ENCODE measurements at regions of chr5 and their contacts with region 1.

Region 1: GRCh38 chr5:112210430-112211005 is 208.6 kb downstream of the EPB41L4A start:
- DNase-seq: no peak
- H3K4me3 ChIP-seq: no peak overlapping the region
- CTCF ChIP-seq: peak; percentile 44

Region 2: DNA sequence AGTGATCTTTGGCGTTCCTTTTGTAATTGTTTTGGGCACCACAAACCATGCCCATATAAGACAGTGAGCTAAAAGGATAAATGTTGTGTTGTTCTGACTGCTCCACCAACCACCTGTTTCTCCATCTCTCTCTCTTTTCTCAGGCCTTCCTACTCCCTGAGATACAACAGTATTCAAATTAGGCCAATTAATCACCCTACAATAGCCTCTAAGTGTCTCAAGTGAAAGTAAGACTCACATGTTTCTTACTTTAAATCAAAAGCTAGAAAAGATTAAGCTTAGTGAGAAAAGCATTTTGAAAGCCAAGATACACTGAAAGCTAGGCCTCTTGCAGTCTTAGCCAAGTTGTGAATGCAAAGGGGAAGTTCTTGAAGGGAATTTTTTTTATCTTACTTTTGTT is 184.8 kb before region 1 on chr5:
- CTCF ChIA-PET with region 1: no interaction called
- POLR2A ChIA-PET with region 1: no interaction called
- DNase-seq: no peak
- H3K4me3 ChIP-seq: no peak overlapping the region
- CTCF ChIP-seq: no peak

Region 3: DNA sequence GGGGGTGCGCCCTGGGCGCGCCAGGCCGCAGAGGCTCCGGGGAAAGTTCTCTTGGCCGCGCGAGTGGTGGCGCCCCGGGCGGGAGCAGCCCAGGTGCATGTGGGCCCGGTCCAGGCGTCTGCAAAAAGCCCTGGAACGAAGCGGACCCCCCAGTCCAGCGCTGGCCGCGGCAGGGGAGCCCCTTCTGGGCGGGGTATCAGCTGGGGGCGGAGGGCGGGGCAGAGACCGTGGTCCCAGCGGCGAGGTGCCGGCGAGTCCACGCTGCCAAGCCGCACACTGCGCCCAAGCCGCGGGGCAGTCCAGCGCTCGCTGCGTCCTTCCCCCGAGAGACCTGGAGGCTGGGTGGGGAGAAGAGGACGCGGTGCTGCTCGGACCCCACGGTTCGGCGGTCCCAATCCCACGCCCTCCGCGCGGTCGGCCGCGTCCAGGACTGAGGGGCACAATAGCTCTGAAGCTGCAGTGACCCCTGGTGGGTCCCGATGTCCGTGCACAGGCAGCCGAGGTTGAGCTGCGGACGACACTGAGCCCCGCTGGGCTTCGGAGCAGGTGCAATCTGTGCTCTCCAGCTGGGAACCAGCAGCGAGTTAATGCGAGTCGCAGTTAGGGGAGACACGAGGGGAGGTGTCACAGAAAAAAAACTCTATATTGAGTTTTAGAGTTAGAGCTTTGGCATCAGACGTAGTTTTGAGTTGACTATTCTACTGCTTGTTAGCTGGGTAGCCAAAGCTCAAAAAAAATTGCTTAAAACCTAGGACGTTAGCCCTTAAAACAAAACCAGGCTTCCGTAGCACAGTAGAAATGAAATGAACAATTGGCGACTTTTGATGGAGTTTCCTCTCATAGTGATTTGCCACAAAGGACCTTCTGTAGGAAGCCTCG is 209.7 kb after region 1 on chr5:
- CTCF ChIA-PET with region 1: interaction called, 12 read pairs
- POLR2A ChIA-PET with region 1: no interaction called
- DNase-seq: no peak
- H3K4me3 ChIP-seq: peak overlapping the region; percentile 54
- CTCF ChIP-seq: peak; percentile 79

Measured in AG04449 (cell line).